ENCODE measurements at regions of chr20 and their contacts with region 1.

Region 1: DNA sequence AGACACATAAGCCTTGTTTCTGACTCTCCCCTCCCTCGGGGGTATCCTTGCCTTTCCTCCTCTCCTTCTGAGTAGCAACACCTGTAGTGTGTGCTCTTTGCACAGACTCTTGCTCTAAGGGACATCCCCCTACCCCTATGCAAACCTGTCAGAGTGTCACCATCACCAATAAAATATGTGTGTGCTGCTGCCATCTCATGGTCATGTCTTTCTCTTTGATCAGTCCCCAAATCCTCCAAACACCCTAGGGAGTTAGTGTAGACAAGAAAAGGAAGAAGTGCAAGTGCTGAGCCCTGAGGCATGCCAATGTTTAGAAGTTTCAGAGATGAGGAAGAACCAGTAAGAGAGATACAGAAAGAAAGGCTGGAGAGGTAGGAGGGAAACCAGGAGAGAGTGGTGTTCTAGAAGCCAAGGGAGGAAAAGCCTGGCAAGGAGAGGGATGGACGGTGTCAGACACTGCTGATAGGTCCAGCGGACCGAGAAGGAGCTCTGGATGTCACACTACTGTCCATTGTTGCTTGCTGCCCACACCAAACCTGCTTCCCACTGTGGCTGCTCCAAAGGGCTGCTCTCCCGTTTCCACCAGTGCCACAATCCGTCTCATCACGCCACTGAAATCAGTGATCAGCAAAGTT is 16.4 kb downstream of the TRMT6 start:
- DNase-seq: peak; percentile 84
- H3K4me3 ChIP-seq: no peak overlapping the region
- H3K27ac ChIP-seq: no peak overlapping the region
- H3K4me1 ChIP-seq: peaks cover 8% of the 10 kb centered on the region
- CTCF ChIP-seq: peak; percentile 83

Region 2: DNA sequence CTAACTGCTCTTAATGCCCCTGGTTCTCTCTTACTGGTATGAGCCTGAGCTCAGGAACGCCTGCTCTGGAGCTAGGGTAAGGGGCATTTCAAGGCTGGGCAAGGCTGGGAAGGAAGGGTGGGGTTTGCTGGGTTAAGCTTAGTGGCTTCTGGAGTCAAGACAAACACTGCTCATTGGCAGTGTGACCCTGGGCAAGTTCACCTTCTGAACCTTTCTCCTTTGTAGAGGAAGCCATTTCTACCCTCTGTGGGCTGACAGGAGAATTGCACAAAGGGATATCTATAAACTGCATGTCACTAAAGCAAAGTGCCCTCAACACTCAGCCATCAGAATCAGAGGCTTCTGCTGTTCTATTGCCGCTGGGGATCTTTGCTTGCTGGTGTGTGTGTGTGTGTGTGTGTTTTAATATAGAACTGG is 140.2 kb after region 1 on chr20:
- CTCF ChIA-PET with region 1: no interaction called
- POLR2A ChIA-PET with region 1: no interaction called
- intact Hi-C with region 1: loop called (anchors 5 kb)
- DNase-seq: peak; percentile 57
- H3K4me3 ChIP-seq: no peak overlapping the region
- H3K27ac ChIP-seq: no peak overlapping the region
- H3K4me1 ChIP-seq: no peaks in the 10 kb centered on the region
- CTCF ChIP-seq: peak; percentile 68

Region 3: GRCh38 chr20:6134592-6134991 is 200.7 kb after region 1 on chr20:
- CTCF ChIA-PET with region 1: no interaction called
- POLR2A ChIA-PET with region 1: no interaction called
- intact Hi-C with region 1: no loop called
- DNase-seq: no peak
- H3K4me3 ChIP-seq: no peak overlapping the region
- H3K27ac ChIP-seq: no peak overlapping the region
- H3K4me1 ChIP-seq: no peaks in the 10 kb centered on the region
- CTCF ChIP-seq: no peak

Measured in OCI-LY7 (cell line).